ENCODE measurements at regions of chr15 and their contacts with region 1.

Region 1: DNA sequence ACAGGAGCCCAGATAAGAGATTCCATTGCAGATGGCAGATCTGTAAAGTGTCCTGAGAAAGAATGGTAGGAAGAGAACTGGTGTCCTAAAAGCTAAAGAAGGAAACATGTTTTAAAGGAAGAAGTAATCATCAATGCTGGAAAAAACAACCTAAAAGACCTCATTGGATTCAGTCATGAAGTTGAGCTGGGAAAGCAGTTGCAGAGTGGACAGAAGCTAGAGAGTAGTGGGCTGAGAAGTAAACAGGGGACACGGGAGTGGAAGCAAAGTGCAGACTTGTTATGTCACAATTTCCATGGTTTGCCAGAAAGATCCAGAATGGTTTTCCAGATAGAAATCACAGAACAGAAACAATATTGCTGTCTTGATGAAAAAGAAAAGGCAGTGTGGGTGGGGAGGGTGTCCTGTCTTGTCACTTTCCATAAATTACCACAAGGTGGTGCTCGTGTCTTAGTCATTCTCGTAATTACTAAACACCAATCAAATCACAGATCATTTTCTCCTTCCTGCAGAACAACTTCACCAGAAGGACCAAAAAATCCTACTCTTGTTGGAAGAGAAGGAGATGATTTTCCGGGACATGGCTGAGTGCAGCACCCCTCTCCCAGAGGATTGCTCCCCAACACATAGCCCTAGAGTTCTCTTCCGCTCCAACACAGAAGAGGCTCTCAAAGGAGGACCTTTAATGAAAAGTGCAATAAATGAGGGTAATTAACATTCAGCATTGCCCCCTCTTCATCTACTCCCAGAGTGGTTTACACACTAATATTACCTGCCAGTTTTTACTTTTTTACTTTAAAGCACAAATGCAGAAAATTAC is 64.5 kb downstream of the KLHL25 start:
- DNase-seq: peak; percentile 51
- H3K4me3 Mint-ChIP-seq: no peak overlapping the region
- H3K27ac Mint-ChIP-seq: peak overlapping the region; percentile 71
- H3K4me1 Mint-ChIP-seq: peaks cover 28% of the 10 kb centered on the region
- H3K27me3 Mint-ChIP-seq: no peaks in the 10 kb centered on the region

Region 2: DNA sequence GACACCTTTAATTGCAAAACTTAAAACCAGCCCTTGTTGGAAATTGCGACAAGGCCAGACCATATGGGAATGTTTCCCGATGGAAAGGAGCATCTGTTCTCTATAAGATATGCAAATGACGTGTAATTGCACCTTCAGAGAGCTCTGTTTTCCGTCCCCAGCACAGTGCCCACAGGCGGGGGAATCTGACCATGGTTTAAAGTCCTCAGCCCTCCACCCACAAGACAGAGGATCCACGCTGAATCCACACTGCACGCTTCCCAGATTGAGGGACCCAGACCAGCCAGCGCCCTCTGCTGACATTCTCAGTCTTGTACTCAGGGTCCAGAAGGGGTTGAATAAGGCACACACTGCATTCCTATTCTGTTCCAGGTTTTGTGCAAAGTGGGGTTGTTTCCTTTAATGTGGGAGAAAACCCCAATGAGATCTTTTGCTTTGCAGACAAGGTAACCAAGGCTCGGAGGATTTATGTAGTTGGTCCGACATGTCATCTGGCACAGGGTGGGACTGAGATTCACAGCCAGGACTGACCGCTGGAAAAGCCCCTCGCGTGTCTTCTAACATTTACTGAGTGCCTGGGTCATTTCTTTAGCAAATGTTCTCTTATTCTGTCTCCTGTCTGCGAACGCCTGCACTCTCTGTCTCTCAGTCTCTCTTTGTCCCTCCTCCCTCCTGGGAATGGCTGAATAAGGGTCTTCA is 101.4 kb after region 1 on chr15:
- CTCF ChIA-PET with region 1: interaction called, 7 read pairs
- POLR2A ChIA-PET with region 1: no interaction called
- intact Hi-C with region 1: loop called (anchors 2 kb)
- DNase-seq: peak; percentile 56
- H3K4me3 Mint-ChIP-seq: no peak overlapping the region
- H3K27ac Mint-ChIP-seq: no peak overlapping the region
- H3K4me1 Mint-ChIP-seq: no peaks in the 10 kb centered on the region
- H3K27me3 Mint-ChIP-seq: peaks cover 3% of the 10 kb centered on the region